A673 (cell line): ENCODE measurements at regions of chr15 and their contacts with region 1.

Region 1: GRCh38 chr15:41494922-41495735 is 1.5 kb downstream of the ITPKA start:
- DNase-seq: no peak
- H3K4me3 ChIP-seq: peak overlapping the region; percentile 53
- H3K27ac ChIP-seq: no peak overlapping the region
- H3K4me1 ChIP-seq: peaks cover 19% of the 10 kb centered on the region
- H3K27me3 ChIP-seq: no peaks in the 10 kb centered on the region
- CTCF ChIP-seq: no peak

Region 2: GRCh38 chr15:41603941-41604911 is 109.1 kb after region 1 on chr15:
- CTCF ChIA-PET with region 1: no interaction called
- POLR2A ChIA-PET with region 1: no interaction called
- intact Hi-C with region 1: no loop called
- DNase-seq: peak; percentile 82
- H3K4me3 ChIP-seq: no peak overlapping the region
- H3K27ac ChIP-seq: no peak overlapping the region
- H3K4me1 ChIP-seq: peaks cover 8% of the 10 kb centered on the region
- H3K27me3 ChIP-seq: no peaks in the 10 kb centered on the region
- CTCF ChIP-seq: peak; percentile 82

Region 3: GRCh38 chr15:41634072-41634626 is 139.0 kb after region 1 on chr15:
- CTCF ChIA-PET with region 1: no interaction called
- POLR2A ChIA-PET with region 1: no interaction called
- intact Hi-C with region 1: no loop called
- DNase-seq: no peak
- H3K4me3 ChIP-seq: no peak overlapping the region
- H3K27ac ChIP-seq: no peak overlapping the region
- H3K4me1 ChIP-seq: peaks cover 6% of the 10 kb centered on the region
- H3K27me3 ChIP-seq: no peaks in the 10 kb centered on the region
- CTCF ChIP-seq: no peak

Region 4: GRCh38 chr15:41666353-41666920 is 171.3 kb after region 1 on chr15:
- CTCF ChIA-PET with region 1: interaction called, 10 read pairs
- POLR2A ChIA-PET with region 1: no interaction called
- intact Hi-C with region 1: no loop called
- DNase-seq: no peak
- H3K4me3 ChIP-seq: no peak overlapping the region
- H3K27ac ChIP-seq: no peak overlapping the region
- H3K4me1 ChIP-seq: peaks cover 8% of the 10 kb centered on the region
- H3K27me3 ChIP-seq: no peaks in the 10 kb centered on the region
- CTCF ChIP-seq: no peak